B cell (primary cell): ENCODE measurements at regions of chr1 and their contacts with region 1.

Region 1: DNA sequence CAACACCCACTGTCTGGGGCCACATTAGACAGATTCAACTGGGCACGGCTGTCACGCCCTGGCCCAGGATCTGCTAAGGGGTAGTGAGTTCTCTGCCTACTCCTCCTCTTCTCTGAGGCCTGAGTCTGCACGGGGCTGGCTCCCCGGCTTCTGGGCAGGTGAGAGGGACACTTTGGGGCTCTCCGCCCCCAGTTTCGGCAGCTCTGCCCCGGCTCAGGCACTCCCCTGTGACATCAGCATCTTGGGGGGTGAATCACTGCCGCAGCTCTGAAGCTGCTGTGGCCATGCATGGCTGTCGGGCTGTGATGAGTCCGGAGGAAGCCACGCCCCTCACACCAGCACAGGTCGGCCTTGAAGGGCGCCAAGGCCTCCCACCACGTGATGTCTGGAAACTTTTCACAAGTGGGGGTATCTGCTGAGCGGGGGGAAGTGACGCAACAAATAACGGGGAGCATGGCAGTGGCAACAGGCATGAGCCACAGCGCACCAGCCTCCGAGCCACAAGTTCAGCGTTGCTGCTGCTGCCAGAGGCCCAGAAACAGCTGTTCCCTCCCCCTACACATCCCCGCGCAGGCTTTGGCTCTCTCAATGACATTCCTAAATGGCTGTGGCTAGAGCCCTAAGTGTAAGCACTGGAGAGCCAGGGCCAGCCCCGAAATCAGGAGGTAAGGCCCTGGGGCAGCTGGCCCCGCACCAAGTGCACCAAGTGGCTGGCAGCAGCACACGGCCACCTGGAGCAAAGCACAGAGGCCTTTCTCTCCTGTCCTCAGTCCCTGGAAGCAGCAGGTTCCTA is 26.3 kb downstream of the ZBTB17 start:
- DNase-seq: peak; percentile 89
- ATAC-seq: peak; percentile 84
- H3K4me3 ChIP-seq: peak overlapping the region in 3 of 5 experiments; percentile 2 to 45 (median 26)
- H3K4me3 Mint-ChIP-seq: peak overlapping the region; percentile 77
- H3K27ac ChIP-seq: peak overlapping the region; percentile 80 to 91
- H3K27ac Mint-ChIP-seq: peak overlapping the region; percentile 97
- H3K4me1 ChIP-seq: peaks cover 35 to 62% of the 10 kb centered on the region in 2 donors
- H3K4me1 Mint-ChIP-seq: peaks cover 66% of the 10 kb centered on the region
- H3K27me3 ChIP-seq: no peaks in the 10 kb centered on the region
- H3K27me3 Mint-ChIP-seq: no peaks in the 10 kb centered on the region
- CTCF ChIP-seq: no peak

Region 2: DNA sequence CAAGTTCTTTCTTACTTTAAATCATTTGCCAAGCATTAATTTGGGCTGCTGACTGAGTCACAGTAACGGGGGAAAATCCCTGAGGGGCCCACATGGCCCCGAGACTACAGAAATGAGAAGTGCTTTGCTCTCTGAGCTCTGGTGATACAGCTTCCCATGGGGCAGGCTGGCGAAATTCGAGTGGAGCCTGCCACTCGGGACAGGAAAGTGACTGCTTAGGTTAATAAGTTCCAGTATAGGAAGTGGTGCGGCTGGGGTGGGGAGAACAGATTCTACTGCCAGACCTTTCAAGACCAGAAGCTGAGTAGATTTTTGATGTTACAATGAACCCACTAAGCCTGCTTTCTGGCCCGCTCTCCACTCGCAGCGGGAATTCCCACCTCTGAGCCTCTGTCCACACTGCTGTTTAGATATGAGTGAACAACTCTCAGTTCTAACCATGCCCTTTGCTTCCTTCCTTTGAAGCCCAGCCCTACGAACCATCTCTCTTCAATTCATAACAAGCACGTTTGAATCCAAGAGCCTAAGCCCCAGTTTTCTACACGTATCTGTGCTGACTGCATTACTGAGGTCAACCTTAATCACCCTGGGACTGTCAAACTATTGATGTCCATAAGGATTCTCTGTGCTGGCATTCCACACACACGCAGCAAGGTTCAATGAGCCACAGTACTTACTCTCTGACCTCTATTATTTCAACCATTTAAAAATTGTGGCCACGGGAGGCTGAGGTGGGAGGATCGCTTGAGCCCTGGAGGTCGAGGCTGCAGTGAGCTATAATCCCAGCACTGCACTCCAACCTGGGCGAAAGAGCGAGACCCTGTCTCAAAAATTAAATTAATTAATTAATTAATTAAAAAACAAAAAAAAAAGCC is 16.7 kb after region 1 on chr1:
- CTCF ChIA-PET with region 1: interaction called, 7 read pairs
- POLR2A ChIA-PET with region 1: interaction called, 10 read pairs
- intact Hi-C with region 1: loop called (anchors 1 kb)
- DNase-seq: peak; percentile 88
- ATAC-seq: peak; percentile 79
- H3K4me3 ChIP-seq: peak overlapping the region in 4 of 5 experiments; percentile 27 to 40 (median 30)
- H3K4me3 Mint-ChIP-seq: peak overlapping the region; percentile 74
- H3K27ac ChIP-seq: peak overlapping the region; percentile 86 to 88
- H3K27ac Mint-ChIP-seq: peak overlapping the region; percentile 97
- H3K4me1 ChIP-seq: peaks cover 56 to 66% of the 10 kb centered on the region in 2 donors
- H3K4me1 Mint-ChIP-seq: peaks cover 65% of the 10 kb centered on the region
- H3K27me3 ChIP-seq: no peaks in the 10 kb centered on the region
- H3K27me3 Mint-ChIP-seq: no peaks in the 10 kb centered on the region
- CTCF ChIP-seq: no peak

Region 3: DNA sequence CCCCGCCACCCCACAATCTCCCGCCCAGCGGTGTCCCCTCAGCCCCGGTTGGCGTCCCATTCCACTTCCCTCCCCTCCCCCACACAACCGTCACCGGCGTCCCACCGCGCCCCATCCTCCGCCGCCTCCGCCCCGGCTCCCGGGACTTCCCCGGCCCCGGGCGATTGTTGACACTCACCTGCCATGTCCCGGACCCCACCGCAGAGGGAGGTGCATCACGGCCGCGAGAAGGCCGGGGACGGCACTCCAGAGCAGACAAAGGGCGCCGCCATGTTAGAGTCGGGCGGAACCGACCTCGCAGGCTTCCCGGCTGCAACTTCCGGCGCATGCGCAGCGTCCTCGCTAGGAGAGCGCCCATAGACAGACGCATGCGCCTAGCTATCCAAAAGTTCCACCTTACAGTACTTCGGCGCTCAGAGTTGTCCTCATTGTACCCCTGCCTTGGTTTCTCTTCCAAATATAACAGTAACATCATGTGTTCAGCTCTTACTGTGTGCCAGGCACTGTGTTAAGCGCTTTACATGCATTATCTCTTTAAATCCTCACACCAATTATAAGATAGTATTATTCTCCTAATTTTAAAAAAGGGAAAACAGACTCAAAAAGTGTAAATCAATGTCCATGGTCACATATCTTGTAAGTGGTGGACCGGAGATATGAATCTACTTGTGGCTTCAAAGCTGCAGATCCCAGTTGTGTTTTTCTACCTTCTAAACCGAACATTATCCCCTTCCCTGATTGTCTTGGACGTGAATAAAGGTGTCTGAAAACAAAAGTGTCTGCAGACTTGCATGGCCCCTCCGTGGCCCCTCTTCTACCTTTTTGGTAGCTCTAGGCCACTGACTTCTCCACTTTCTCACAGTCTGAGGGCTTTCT is 26.4 kb after region 1 on chr1 and contains the start of gene ZBTB17:
- CTCF ChIA-PET with region 1: interaction called, 7 read pairs
- POLR2A ChIA-PET with region 1: interaction called, 10 read pairs
- intact Hi-C with region 1: loop called (anchors 1 kb)
- DNase-seq: peak; percentile 97
- ATAC-seq: peak; percentile 81
- H3K4me3 ChIP-seq: peak within 1 kb of the TSS; percentile 58 to 94 (median 88)
- H3K4me3 Mint-ChIP-seq: peak within 1 kb of the TSS; percentile 93
- H3K27ac ChIP-seq: peak within 1 kb of the TSS; percentile 70 to 86
- H3K27ac Mint-ChIP-seq: peak within 1 kb of the TSS; percentile 92
- H3K4me1 ChIP-seq: peaks cover 20 to 33% of the 10 kb centered on the region in 2 donors
- H3K4me1 Mint-ChIP-seq: peaks cover 35% of the 10 kb centered on the region
- H3K27me3 ChIP-seq: no peaks in the 10 kb centered on the region
- H3K27me3 Mint-ChIP-seq: no peaks in the 10 kb centered on the region
- CTCF ChIP-seq: no peak
- total RNA-seq, gene ZBTB17: 94.1 and 101 TPM in 2 replicates

Region 4: GRCh38 chr1:16354619-16355018 is 405.0 kb after region 1 on chr1:
- CTCF ChIA-PET with region 1: no interaction called
- POLR2A ChIA-PET with region 1: no interaction called
- intact Hi-C with region 1: no loop called
- DNase-seq: no peak
- ATAC-seq: no peak
- H3K4me3 ChIP-seq: no peak overlapping the region
- H3K4me3 Mint-ChIP-seq: no peak overlapping the region
- H3K27ac ChIP-seq: no peak overlapping the region
- H3K27ac Mint-ChIP-seq: no peak overlapping the region
- H3K4me1 ChIP-seq: peaks cover 19 to 30% of the 10 kb centered on the region in 2 donors
- H3K4me1 Mint-ChIP-seq: peaks cover 17% of the 10 kb centered on the region
- H3K27me3 ChIP-seq: no peaks in the 10 kb centered on the region
- H3K27me3 Mint-ChIP-seq: no peaks in the 10 kb centered on the region
- CTCF ChIP-seq: no peak